Common myeloid progenitor, CD34-positive (primary cell): ENCODE measurements at regions of chr1 and their contacts with region 1.

Region 1: DNA sequence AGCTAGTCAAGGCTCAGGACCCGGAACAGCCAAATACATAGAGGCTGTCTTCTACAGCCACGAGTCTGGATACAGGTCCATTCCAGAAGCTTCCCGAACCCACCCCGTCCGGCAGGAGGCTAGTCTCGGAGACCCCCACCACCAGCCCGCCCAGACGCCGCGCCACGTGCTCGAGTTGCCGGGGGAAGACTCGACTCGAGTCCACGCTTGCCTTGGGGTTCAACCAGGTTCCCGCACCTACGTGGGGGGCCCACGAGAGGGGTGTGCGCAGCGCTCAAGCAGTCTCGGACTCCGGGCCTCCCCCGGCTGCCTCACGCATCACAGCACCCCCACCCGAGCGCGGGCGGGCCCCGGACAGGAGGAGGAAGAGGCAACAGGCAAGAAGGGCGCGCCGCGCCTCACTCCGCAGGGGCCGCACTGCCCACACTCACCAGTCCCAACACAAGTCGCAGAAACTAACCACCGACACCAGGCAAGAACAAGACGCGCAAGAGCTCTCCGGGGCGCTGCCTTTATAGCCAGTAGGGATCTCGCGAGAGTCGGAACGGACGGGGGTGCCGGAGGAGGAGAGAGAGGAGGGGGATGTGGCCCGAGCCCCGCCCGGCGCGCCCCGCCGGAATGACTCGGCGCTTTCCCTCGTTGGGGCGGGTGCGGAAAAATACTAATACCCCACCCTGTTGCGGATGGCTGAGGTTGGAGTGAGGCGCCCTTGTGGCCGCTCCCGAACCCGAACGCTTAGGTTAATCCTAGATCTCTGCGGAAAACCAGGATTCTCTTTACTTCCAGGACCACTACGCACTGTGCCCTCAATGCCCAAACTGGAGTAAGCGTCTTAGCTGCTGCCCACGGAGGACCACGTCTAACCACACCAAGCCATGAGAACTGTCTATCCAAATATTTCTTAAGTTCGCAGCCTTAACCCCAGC is at the start of gene PRDX1:
- DNase-seq: peak; percentile 96 to 99 (median 98)
- H3K4me3 ChIP-seq: peak within 1 kb of the TSS; percentile 67 to 99 (median 91)
- H3K27ac ChIP-seq: peak within 1 kb of the TSS; percentile 64 to 89
- H3K4me1 ChIP-seq: peaks cover 4 to 49% (median 36%) of the 10 kb centered on the region in 4 experiments
- H3K27me3 ChIP-seq: no peaks in the 10 kb centered on the region

Region 2: DNA sequence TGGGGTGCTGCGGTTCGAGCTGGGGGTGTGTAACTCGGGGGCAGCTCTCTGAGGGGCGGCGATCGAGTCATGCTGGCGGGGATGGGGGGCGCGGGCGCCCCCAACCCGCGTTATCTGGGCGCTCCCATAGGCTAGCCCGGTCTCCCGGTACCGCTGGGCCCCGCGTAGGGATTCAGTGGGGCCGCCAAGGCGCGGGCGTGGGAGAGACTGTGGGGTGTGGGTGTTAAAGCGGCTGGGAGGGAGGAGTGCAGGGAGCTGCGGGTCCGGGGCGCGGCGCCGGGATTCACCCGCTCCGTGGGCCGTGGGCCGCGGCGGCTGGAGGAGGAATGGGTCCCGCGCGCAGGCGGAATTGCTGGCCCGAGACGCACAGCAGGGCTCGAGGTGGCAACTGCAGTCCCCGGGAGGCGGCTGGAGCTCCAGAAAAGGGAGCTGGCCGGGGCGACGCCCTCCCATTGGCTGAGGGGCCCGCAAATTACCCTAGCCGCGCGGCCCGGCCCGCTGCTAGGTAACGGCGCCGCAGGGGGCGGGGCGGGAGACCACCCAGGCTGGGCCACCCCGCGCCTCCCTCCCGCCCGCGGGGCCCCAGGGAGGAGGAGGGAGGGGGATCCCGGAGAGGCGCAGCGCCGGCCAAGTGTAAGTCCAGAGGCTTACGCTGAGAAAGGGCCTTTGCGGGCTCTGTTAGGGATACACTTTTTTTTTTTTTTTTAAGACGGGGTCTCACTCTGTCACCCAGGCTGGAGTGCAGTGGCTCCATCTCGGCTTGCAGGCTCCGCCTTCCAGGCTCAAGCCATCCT is 678.6 kb before region 1 on chr1 and contains the start of gene PTCH2:
- CTCF ChIA-PET with region 1: no interaction called
- POLR2A ChIA-PET with region 1: no interaction called
- DNase-seq: peak; percentile 67 to 85 (median 82)
- H3K4me3 ChIP-seq: peak within 1 kb of the TSS; percentile 22 to 78 (median 66)
- H3K27ac ChIP-seq: no peak within 1 kb of the TSS
- H3K4me1 ChIP-seq: peaks cover 0 to 10% (median 8%) of the 10 kb centered on the region in 4 experiments
- H3K27me3 ChIP-seq: no peaks in the 10 kb centered on the region

Region 3: DNA sequence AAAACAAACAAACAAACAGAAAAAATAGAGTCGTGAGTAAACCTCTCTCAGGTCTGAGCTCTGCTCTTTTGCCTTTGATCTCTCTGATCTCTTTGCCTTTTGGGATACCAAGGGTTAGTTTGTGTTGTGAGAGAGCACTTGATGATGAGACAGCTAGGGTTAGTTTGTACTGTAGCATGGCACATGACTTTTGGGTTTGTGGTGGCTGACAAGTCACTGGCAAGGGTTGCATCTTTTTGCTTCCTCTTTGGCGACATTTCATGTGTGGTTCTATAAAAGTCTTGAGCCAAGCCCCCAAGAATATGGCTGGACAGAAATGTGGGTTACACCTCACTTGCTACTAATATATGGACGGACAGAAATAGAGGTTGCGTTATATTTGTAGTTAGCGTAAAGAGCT is 91.2 kb before region 1 on chr1:
- CTCF ChIA-PET with region 1: no interaction called
- POLR2A ChIA-PET with region 1: no interaction called
- DNase-seq: peak in 2 of 3 donors; percentile 31 to 45
- H3K4me3 ChIP-seq: no peak overlapping the region
- H3K27ac ChIP-seq: no peak overlapping the region
- H3K4me1 ChIP-seq: peaks cover 0 to 13% (median 0%) of the 10 kb centered on the region in 4 experiments
- H3K27me3 ChIP-seq: no peaks in the 10 kb centered on the region

Region 4: GRCh38 chr1:45499415-45499769 is 22.3 kb before region 1 on chr1:
- CTCF ChIA-PET with region 1: interaction called, 7 read pairs
- POLR2A ChIA-PET with region 1: interaction called, 11 read pairs
- DNase-seq: peak in 2 of 3 donors; percentile 26 to 31
- H3K4me3 ChIP-seq: peak overlapping the region; percentile 70 to 96 (median 82)
- H3K27ac ChIP-seq: peak overlapping the region in 1 of 2 experiments; percentile 59
- H3K4me1 ChIP-seq: peaks cover 7 to 21% (median 14%) of the 10 kb centered on the region in 4 experiments
- H3K27me3 ChIP-seq: no peaks in the 10 kb centered on the region

Region 5: DNA sequence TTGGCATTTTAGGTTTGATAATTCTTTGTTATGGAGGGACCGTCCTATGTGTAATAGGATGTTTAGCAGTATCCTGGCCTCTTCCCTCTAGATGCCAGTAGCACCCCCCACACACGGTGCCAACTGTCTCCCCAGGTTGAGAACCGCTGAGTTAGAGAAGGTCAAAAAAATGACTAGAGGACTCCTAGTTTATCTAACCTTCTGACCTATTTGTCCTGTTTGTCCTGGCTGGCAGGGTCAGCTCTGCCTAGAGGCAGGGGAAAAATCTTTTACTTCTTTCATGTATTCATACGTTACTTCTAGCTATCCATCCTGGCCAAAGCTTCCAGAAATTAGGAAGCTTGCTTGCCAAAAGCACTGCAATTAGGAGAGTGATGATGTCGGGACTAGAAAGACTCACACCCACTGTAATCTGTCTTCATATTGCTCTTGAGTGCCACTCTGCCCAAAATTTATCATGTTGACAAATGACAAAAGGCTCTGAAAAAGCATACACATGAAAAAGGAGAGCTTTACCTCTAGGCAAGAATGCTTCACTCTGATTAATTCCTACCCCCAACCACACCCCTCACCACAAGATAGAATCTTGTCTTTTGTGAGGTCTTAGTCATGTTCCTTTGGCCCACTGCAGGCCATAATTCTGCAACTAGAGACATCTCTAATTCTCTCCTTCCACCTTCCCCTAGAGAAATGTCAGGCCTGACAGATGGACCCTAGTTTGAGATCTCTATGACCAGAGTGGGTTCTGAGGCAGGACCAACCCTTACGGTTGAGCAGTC is 14.5 kb after region 1 on chr1:
- CTCF ChIA-PET with region 1: interaction called, 37 read pairs
- POLR2A ChIA-PET with region 1: interaction called, 53 read pairs
- DNase-seq: peak in 1 of 3 donors; percentile 46
- H3K4me3 ChIP-seq: no peak overlapping the region
- H3K27ac ChIP-seq: no peak overlapping the region
- H3K4me1 ChIP-seq: peaks cover 0 to 9% (median 2%) of the 10 kb centered on the region in 4 experiments
- H3K27me3 ChIP-seq: no peaks in the 10 kb centered on the region

Region 6: GRCh38 chr1:45543581-45544417 is 22.1 kb after region 1 on chr1:
- CTCF ChIA-PET with region 1: interaction called, 37 read pairs
- POLR2A ChIA-PET with region 1: interaction called, 53 read pairs
- DNase-seq: peak; percentile 91 to 98 (median 97)
- H3K4me3 ChIP-seq: peak overlapping the region in 6 of 7 experiments; percentile 17 to 64 (median 36)
- H3K27ac ChIP-seq: peak overlapping the region in 1 of 2 experiments; percentile 57
- H3K4me1 ChIP-seq: peaks cover 30 to 54% (median 44%) of the 10 kb centered on the region in 4 experiments
- H3K27me3 ChIP-seq: no peaks in the 10 kb centered on the region

Region 7: DNA sequence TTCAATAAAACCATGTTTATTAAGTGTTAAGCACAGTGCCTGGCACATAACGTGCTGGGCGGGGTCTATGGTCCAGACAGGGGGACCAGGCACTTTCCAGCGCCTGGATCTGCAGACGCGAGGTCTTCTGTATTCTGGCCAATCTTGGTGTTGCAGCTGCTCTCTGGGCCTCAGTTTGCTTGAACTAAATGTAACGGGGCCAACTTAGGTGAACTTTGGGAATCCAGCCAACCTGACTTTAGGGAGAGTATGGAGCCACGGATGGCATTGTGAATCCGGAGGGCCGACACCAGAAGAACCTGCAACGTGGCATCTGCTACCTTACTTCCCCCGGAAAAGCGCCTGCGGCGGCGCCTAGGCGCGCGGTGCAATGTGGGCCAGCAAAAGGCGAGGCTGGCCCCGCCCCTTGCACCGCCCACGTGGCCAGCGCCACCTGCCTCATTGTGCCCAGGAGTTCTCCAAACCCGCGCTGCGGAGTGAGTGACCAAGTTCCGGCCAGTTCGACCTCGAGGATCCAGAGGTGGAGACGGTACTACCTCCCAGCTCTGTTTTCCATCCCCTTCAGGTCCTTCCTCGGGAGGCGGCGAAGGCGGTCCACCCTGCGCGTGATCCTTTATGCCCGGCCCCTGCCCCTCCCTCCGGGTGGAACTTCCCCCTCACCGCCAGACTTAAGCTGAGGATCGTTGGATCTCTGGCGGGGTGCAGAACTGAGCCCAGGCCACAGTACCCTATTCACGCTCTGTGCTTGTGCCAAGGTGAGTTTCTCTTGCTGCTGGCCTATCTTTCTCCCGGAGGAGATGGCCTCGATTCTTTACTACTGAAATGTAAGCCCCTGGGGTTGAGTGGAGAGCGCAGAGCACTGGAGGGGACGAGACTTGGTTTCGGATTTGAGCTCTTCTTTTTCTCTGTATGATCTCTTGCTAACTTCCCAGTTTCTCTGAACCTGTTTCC is 29.0 kb after region 1 on chr1 and contains the start of gene AKR1A1:
- CTCF ChIA-PET with region 1: interaction called, 13 read pairs
- POLR2A ChIA-PET with region 1: interaction called, 53 read pairs
- DNase-seq: peak; percentile 85 to 94 (median 92)
- H3K4me3 ChIP-seq: peak within 1 kb of the TSS; percentile 84 to 99 (median 91)
- H3K27ac ChIP-seq: peak within 1 kb of the TSS; percentile 66 to 85
- H3K4me1 ChIP-seq: peaks cover 14 to 41% (median 30%) of the 10 kb centered on the region in 4 experiments
- H3K27me3 ChIP-seq: no peaks in the 10 kb centered on the region

Region 8: GRCh38 chr1:45557422-45557944 is 35.8 kb after region 1 on chr1:
- CTCF ChIA-PET with region 1: interaction called, 171 read pairs
- POLR2A ChIA-PET with region 1: interaction called, 17 read pairs
- DNase-seq: no peak
- H3K4me3 ChIP-seq: no peak overlapping the region
- H3K27ac ChIP-seq: peak overlapping the region in 1 of 2 experiments; percentile 33
- H3K4me1 ChIP-seq: peaks cover 2 to 14% (median 7%) of the 10 kb centered on the region in 4 experiments
- H3K27me3 ChIP-seq: no peaks in the 10 kb centered on the region

Region 9: DNA sequence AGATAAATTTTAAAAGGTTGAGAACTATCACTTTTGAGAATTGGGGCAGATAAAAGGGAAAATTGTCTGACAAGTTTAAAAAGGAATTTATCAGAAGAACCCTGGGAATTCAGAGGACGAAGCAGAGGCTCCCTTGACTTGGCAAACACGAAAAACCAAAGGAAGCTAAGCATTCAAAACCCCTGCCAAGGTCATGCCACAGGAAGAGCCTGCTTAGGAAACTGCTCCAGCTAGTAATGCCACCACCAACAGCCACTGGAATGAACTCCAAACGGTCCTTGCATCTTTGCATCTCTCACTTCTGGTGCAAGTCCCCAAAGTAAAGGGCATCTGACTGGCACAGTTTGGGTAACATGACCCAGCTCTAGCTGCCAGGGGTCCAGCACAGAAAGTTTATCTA is 157.5 kb after region 1 on chr1:
- CTCF ChIA-PET with region 1: no interaction called
- POLR2A ChIA-PET with region 1: no interaction called
- DNase-seq: peak in 2 of 3 donors; percentile 21 to 41
- H3K4me3 ChIP-seq: peak overlapping the region in 4 of 7 experiments; percentile 15 to 48 (median 29)
- H3K27ac ChIP-seq: peak overlapping the region in 1 of 2 experiments; percentile 43
- H3K4me1 ChIP-seq: peaks cover 2 to 63% (median 34%) of the 10 kb centered on the region in 4 experiments
- H3K27me3 ChIP-seq: no peaks in the 10 kb centered on the region